Naive thymus-derived CD4-positive, alpha-beta T cell (primary cell): ENCODE measurements at regions of chr19 and their contacts with region 1.

Region 1: DNA sequence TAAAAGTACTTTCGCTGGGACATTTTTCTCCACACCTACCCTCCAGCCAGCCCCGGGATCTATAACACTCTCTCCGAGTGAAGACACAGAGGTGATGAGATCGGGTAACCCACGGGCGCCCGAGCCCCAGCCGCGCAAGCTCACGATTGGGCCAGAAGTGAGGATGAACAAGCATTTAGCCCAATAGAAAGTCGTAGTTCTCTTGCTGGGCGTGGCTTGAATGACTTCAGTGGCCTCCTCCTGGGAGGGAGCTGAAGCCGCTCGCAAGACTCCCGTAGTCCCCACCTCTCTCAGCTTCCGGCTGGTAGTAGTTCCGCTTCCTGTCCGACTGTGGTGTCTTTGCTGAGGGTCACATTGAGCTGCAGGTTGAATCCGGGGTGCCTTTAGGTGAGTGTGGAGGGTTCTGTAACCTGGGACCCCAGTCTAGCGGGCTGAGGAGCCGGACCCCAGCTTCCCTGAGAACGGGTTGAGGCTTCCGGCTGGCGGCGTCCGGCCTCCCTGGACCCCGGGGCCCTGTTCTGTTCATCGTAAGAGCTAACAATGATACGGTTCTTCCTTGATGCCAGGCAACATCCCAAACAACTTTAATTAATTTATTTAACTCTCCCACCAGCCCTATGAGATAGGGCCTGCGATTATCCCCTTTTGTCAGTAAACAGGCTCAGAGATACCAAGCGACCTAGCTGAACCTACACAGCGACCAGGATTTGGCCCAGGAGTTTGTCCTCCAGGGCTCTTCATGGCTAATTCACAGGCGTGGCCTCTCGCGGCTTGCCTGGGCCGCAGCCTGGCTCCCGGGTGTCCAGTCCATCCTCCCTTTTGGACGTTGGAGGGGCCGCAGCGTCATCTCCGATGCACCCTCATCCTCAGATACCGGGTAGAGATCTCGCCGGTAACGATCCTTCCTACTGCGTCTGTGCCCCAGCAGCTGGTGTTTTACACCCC is at the start of gene COX6B1:
- DNase-seq: peak; percentile 63 to 95 (median 91)
- ATAC-seq: peak; percentile 80
- H3K4me3 ChIP-seq: peak within 1 kb of the TSS; percentile 95
- H3K4me3 Mint-ChIP-seq: peak within 1 kb of the TSS; percentile 88 to 99 (median 97)
- H3K27ac ChIP-seq: peak within 1 kb of the TSS; percentile 89
- H3K27ac Mint-ChIP-seq: peak within 1 kb of the TSS; percentile 89 to 98 (median 95)
- H3K4me1 ChIP-seq: peaks cover 7 to 25% of the 10 kb centered on the region in 2 donors
- H3K4me1 Mint-ChIP-seq: peaks cover 17 to 67% (median 42%) of the 10 kb centered on the region in 7 donors
- H3K27me3 ChIP-seq: no peaks in the 10 kb centered on the region
- H3K27me3 Mint-ChIP-seq: no peaks in the 10 kb centered on the region
- total RNA-seq, gene COX6B1: 172 to 464 (median 232) TPM

Region 2: GRCh38 chr19:35533822-35534521 is 114.3 kb before region 1 on chr19:
- CTCF ChIA-PET with region 1: no interaction called
- POLR2A ChIA-PET with region 1: no interaction called
- intact Hi-C with region 1: no loop called
- DNase-seq: peak in 8 of 9 donors; percentile 26 to 67 (median 52)
- ATAC-seq: peak; percentile 90
- H3K4me3 ChIP-seq: peak overlapping the region; percentile 45
- H3K4me3 Mint-ChIP-seq: peak overlapping the region; percentile 65 to 90 (median 80)
- H3K27ac ChIP-seq: no peak overlapping the region
- H3K27ac Mint-ChIP-seq: peak overlapping the region in 8 of 9 donors; percentile 10 to 84 (median 54)
- H3K4me1 ChIP-seq: peaks cover 0 to 3% of the 10 kb centered on the region in 2 donors
- H3K4me1 Mint-ChIP-seq: peaks cover 5 to 17% (median 14%) of the 10 kb centered on the region in 7 donors
- H3K27me3 ChIP-seq: no peaks in the 10 kb centered on the region
- H3K27me3 Mint-ChIP-seq: peaks cover 5 to 36% (median 9%) of the 10 kb centered on the region in 5 donors

Region 3: DNA sequence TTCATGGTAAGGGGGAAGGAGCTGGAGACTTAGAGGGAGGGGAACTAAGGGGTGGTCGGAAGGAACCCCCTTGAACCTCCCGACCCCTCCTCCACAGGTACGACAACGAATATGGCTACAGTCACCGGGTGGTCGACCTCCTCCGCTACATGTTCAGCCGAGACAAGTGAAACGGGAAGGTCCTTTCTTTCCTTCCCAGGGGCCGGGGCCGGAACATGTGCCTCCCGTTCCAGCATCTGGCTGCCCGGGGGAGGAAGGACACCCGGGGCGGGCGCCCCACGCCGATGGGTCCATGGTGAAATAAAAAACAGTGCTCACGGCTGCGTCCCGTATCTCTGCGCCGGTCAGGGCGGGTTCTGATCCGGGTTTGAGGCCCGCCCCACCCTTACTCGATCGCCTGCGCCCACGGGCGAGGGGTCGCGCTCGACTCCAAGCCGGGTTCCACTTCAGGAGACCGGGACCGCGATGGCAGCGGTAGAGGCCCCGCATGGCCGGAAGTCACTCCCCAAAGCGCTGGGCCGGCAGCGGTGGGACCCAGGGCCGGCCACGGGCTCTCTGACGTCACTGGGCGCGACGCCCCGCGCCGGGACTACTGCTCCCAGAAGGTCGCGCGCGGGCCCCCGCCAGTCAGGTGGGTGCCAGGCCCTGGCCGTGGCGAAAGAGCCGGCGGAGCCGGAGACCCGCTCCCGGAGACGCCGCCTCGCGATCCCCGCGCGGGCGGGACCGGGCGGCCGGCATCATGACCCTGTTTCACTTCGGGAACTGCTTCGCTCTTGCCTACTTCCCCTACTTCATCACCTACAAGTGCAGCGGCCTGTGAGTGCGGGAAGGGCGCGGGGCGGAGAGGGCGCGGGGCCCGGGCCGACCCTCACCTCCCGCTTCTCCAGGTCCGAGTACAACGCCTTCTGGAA is 103.0 kb before region 1 on chr19 and contains the start of gene TMEM147:
- CTCF ChIA-PET with region 1: interaction called, 4 read pairs
- POLR2A ChIA-PET with region 1: interaction called, 3 read pairs
- intact Hi-C with region 1: loop called (anchors 1 kb)
- DNase-seq: peak; percentile 60 to 90 (median 69)
- ATAC-seq: peak; percentile 91
- H3K4me3 ChIP-seq: peak within 1 kb of the TSS; percentile 78
- H3K4me3 Mint-ChIP-seq: peak within 1 kb of the TSS; percentile 79 to 93 (median 89)
- H3K27ac ChIP-seq: peak within 1 kb of the TSS; percentile 84
- H3K27ac Mint-ChIP-seq: peak within 1 kb of the TSS; percentile 52 to 96 (median 90)
- H3K4me1 ChIP-seq: peaks cover 13 to 16% of the 10 kb centered on the region in 2 donors
- H3K4me1 Mint-ChIP-seq: peaks cover 27 to 41% (median 38%) of the 10 kb centered on the region in 7 donors
- H3K27me3 ChIP-seq: no peaks in the 10 kb centered on the region
- H3K27me3 Mint-ChIP-seq: no peaks in the 10 kb centered on the region
- total RNA-seq, gene TMEM147: 24.7 to 54.0 (median 34.6) TPM

Region 4: DNA sequence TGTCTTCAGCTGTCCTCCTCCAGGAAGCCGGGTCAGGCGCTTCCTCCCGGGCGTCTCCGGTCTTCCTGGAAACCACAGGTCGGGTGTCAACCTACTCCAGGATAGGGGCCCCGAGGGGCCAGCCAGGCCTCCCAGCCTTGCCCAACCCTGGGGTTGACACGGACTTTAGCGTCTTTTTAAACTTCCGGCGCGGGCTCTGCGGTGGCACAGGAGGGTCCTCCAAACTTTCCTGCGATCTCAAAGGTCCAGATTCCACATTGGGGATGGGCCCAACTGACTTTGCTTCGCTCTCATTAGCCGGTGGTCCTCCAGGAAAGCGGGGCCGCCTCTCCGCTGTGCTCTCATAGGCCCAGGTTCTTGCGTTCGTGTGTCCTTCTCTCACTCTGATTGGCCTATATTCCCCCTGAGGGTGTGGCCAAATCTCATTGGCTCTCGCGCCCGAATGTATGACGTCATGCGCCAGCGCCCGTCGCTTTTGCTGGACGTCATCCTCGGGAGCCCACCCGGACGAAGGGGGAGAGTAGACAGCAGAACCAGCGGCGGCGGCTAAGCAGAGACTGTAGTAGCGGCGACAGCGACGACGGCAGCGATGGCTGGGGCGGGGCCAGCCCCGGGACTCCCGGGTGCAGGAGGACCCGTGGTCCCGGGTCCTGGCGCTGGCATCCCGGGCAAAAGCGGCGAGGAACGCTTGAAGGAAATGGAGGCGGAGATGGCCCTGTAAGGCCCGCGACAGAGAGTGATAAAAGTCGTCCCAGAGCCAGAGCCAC is 19.5 kb before region 1 on chr19 and contains the start of gene RBM42:
- CTCF ChIA-PET with region 1: no interaction called
- POLR2A ChIA-PET with region 1: interaction called, 7 read pairs
- intact Hi-C with region 1: loop called (anchors 1 kb)
- DNase-seq: peak; percentile 87 to 98 (median 97)
- ATAC-seq: peak; percentile 100
- H3K4me3 ChIP-seq: peak within 1 kb of the TSS; percentile 89
- H3K4me3 Mint-ChIP-seq: peak within 1 kb of the TSS; percentile 91 to 100 (median 98)
- H3K27ac ChIP-seq: peak within 1 kb of the TSS; percentile 89
- H3K27ac Mint-ChIP-seq: peak within 1 kb of the TSS; percentile 92 to 100 (median 99)
- H3K4me1 ChIP-seq: peaks cover 6 to 15% of the 10 kb centered on the region in 2 donors
- H3K4me1 Mint-ChIP-seq: peaks cover 12 to 35% (median 25%) of the 10 kb centered on the region in 7 donors
- H3K27me3 ChIP-seq: no peaks in the 10 kb centered on the region
- H3K27me3 Mint-ChIP-seq: no peaks in the 10 kb centered on the region
- total RNA-seq, gene RBM42: 39.0 to 98.2 (median 51.3) TPM

Region 5: DNA sequence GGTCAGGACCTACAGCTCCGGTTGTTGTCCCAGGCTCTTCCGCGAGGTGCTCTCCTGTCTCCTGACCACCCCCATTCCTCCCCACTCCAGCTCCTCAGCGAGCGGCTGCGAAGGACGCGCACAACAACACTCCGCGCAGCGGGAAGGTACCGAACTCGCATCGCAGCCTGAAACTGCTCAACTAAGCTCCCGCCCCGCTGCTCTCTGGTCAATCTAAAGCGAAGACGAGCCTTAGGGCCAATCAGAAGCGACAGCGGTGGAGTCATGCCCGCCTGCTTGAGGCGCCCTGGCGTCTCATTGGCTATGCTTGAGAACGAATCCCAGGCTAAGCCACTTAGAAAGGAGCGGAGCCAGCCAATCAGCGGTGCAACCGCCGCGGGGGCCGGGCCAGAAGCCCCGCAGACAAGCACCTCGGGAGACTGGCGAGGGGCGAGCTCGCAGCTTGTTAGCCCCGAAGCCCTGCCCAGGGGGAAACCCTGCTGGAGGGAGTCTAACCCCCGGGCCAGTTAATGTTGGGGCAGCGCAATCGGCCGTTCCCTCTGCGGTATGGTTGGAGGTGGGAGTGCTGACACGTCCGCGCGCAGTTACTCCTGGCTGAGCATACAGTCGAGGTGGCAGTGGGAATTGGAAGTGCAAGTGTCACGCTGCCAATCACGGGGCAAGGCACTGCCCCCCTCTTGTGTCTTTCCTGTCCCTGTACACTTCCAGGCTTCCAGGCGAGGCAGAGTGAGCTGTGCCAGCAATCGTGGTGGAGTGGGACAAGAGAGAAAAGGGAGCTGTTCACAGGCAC is 54.1 kb after region 1 on chr19:
- CTCF ChIA-PET with region 1: interaction called, 3 read pairs
- POLR2A ChIA-PET with region 1: interaction called, 4 read pairs
- intact Hi-C with region 1: loop called (anchors 1 to 5 kb)
- DNase-seq: peak; percentile 66 to 96 (median 90)
- ATAC-seq: peak; percentile 100
- H3K4me3 ChIP-seq: peak overlapping the region; percentile 85
- H3K4me3 Mint-ChIP-seq: peak overlapping the region; percentile 88 to 100 (median 96)
- H3K27ac ChIP-seq: peak overlapping the region; percentile 66
- H3K27ac Mint-ChIP-seq: peak overlapping the region; percentile 79 to 98 (median 93)
- H3K4me1 ChIP-seq: no peaks in the 10 kb centered on the region
- H3K4me1 Mint-ChIP-seq: peaks cover 5 to 22% (median 6%) of the 10 kb centered on the region in 7 donors
- H3K27me3 ChIP-seq: no peaks in the 10 kb centered on the region
- H3K27me3 Mint-ChIP-seq: peaks cover 0 to 4% (median 0%) of the 10 kb centered on the region in 5 donors

Region 6: GRCh38 chr19:35869327-35870123 is 221.2 kb after region 1 on chr19:
- CTCF ChIA-PET with region 1: no interaction called
- POLR2A ChIA-PET with region 1: no interaction called
- intact Hi-C with region 1: loop called in 1 of 2 experiments (anchors 1 kb)
- DNase-seq: peak; percentile 55 to 88 (median 78)
- ATAC-seq: peak; percentile 95
- H3K4me3 ChIP-seq: no peak overlapping the region
- H3K4me3 Mint-ChIP-seq: peak overlapping the region; percentile 75 to 92 (median 82)
- H3K27ac ChIP-seq: no peak overlapping the region
- H3K27ac Mint-ChIP-seq: peak overlapping the region in 5 of 9 donors; percentile 12 to 68 (median 53)
- H3K4me1 ChIP-seq: peaks cover 16 to 18% of the 10 kb centered on the region in 2 donors
- H3K4me1 Mint-ChIP-seq: peaks cover 13 to 22% (median 17%) of the 10 kb centered on the region in 7 donors
- H3K27me3 ChIP-seq: peaks cover 5 to 7% of the 10 kb centered on the region in 2 donors
- H3K27me3 Mint-ChIP-seq: peaks cover 22 to 57% (median 42%) of the 10 kb centered on the region in 5 donors

Region 7: GRCh38 chr19:36378625-36379509 is 730.6 kb after region 1 on chr19 and contains the start of gene ZFP14:
- CTCF ChIA-PET with region 1: no interaction called
- POLR2A ChIA-PET with region 1: no interaction called
- intact Hi-C with region 1: loop called in 1 of 2 experiments (anchors 10 kb)
- DNase-seq: peak; percentile 86 to 95 (median 93)
- ATAC-seq: peak; percentile 99
- H3K4me3 ChIP-seq: peak within 1 kb of the TSS; percentile 86
- H3K4me3 Mint-ChIP-seq: peak within 1 kb of the TSS; percentile 82 to 98 (median 94)
- H3K27ac ChIP-seq: peak within 1 kb of the TSS; percentile 86
- H3K27ac Mint-ChIP-seq: peak within 1 kb of the TSS; percentile 55 to 98 (median 94)
- H3K4me1 ChIP-seq: peaks cover 0 to 10% of the 10 kb centered on the region in 2 donors
- H3K4me1 Mint-ChIP-seq: peaks cover 9 to 23% (median 21%) of the 10 kb centered on the region in 7 donors
- H3K27me3 ChIP-seq: no peaks in the 10 kb centered on the region
- H3K27me3 Mint-ChIP-seq: no peaks in the 10 kb centered on the region
- total RNA-seq, gene ZFP14: 5.3 to 24.0 (median 9.2) TPM